ENCODE measurements at regions of chr5 and their contacts with region 1.

Region 1: GRCh38 chr5:80093796-80094195 is 58.6 kb downstream of the THBS4 start:
- DNase-seq: no peak
- H3K4me3 ChIP-seq: no peak overlapping the region
- H3K27ac ChIP-seq: no peak overlapping the region
- H3K4me1 ChIP-seq: no peaks in the 10 kb centered on the region
- H3K27me3 ChIP-seq: no peaks in the 10 kb centered on the region
- CTCF ChIP-seq: no peak

Region 2: GRCh38 chr5:79408028-79408427 is 685.8 kb before region 1 on chr5:
- CTCF ChIA-PET with region 1: interaction called, 13 read pairs
- POLR2A ChIA-PET with region 1: no interaction called
- intact Hi-C with region 1: no loop called
- DNase-seq: no peak
- H3K4me3 ChIP-seq: no peak overlapping the region
- H3K27ac ChIP-seq: no peak overlapping the region
- H3K4me1 ChIP-seq: no peaks in the 10 kb centered on the region
- H3K27me3 ChIP-seq: no peaks in the 10 kb centered on the region
- CTCF ChIP-seq: no peak

Region 3: GRCh38 chr5:79990598-79991507 is 102.9 kb before region 1 on chr5 and contains the start of gene MTX3:
- CTCF ChIA-PET with region 1: no interaction called
- POLR2A ChIA-PET with region 1: no interaction called
- intact Hi-C with region 1: no loop called
- DNase-seq: peak; percentile 75 to 77
- H3K4me3 ChIP-seq: peak within 1 kb of the TSS; percentile 72
- H3K27ac ChIP-seq: peak within 1 kb of the TSS; percentile 81
- H3K4me1 ChIP-seq: peaks cover 23% of the 10 kb centered on the region
- H3K27me3 ChIP-seq: no peaks in the 10 kb centered on the region
- CTCF ChIP-seq: no peak
- total RNA-seq, gene MTX3: 20.9 and 22.8 TPM in 2 replicates

Region 4: GRCh38 chr5:80255732-80256479 is 162.1 kb after region 1 on chr5 and contains the start of gene SERINC5:
- CTCF ChIA-PET with region 1: interaction called, 5 read pairs
- POLR2A ChIA-PET with region 1: no interaction called
- intact Hi-C with region 1: loop called (anchors 5 kb)
- DNase-seq: peak; percentile 53 to 79
- H3K4me3 ChIP-seq: peak within 1 kb of the TSS; percentile 76
- H3K27ac ChIP-seq: peak within 1 kb of the TSS; percentile 94
- H3K4me1 ChIP-seq: peaks cover 36% of the 10 kb centered on the region
- H3K27me3 ChIP-seq: no peaks in the 10 kb centered on the region
- CTCF ChIP-seq: no peak
- total RNA-seq, gene SERINC5: 68.8 and 77.7 TPM in 2 replicates

Region 5: GRCh38 chr5:80275347-80275746 is 181.6 kb after region 1 on chr5:
- CTCF ChIA-PET with region 1: interaction called, 15 read pairs
- POLR2A ChIA-PET with region 1: no interaction called
- intact Hi-C with region 1: loop called (anchors 1 kb)
- DNase-seq: no peak
- H3K4me3 ChIP-seq: no peak overlapping the region
- H3K27ac ChIP-seq: no peak overlapping the region
- H3K4me1 ChIP-seq: peaks cover 3% of the 10 kb centered on the region; the same call in 1 of the 2 replicates
- H3K27me3 ChIP-seq: no peaks in the 10 kb centered on the region
- CTCF ChIP-seq: peak; percentile 50; the same call in 1 of the 2 replicates

Region 6: GRCh38 chr5:80654391-80655230 is 560.8 kb after region 1 on chr5 and contains the starts of genes DHFR and MSH3:
- CTCF ChIA-PET with region 1: no interaction called
- POLR2A ChIA-PET with region 1: no interaction called
- intact Hi-C with region 1: no loop called
- DNase-seq: peak; percentile 78 to 80
- H3K4me3 ChIP-seq: peak within 1 kb of the TSS; percentile 94
- H3K27ac ChIP-seq: peak within 1 kb of the TSS; percentile 76
- H3K4me1 ChIP-seq: peaks cover 17% of the 10 kb centered on the region
- H3K27me3 ChIP-seq: no peaks in the 10 kb centered on the region
- CTCF ChIP-seq: no peak; the same call in 1 of the 2 replicates
- total RNA-seq, gene DHFR: 28.7 and 45.3 TPM in 2 replicates
- total RNA-seq, gene MSH3: 14.4 and 16.9 TPM in 2 replicates

Region 7: GRCh38 chr5:80672140-80672736 is 578.4 kb after region 1 on chr5:
- CTCF ChIA-PET with region 1: interaction called, 9 read pairs
- POLR2A ChIA-PET with region 1: no interaction called
- intact Hi-C with region 1: loop called (anchors 5 kb)
- DNase-seq: peak; percentile 57 to 58
- H3K4me3 ChIP-seq: no peak overlapping the region
- H3K27ac ChIP-seq: no peak overlapping the region
- H3K4me1 ChIP-seq: no peaks in the 10 kb centered on the region
- H3K27me3 ChIP-seq: no peaks in the 10 kb centered on the region
- CTCF ChIP-seq: peak; percentile 91

Region 8: DNA sequence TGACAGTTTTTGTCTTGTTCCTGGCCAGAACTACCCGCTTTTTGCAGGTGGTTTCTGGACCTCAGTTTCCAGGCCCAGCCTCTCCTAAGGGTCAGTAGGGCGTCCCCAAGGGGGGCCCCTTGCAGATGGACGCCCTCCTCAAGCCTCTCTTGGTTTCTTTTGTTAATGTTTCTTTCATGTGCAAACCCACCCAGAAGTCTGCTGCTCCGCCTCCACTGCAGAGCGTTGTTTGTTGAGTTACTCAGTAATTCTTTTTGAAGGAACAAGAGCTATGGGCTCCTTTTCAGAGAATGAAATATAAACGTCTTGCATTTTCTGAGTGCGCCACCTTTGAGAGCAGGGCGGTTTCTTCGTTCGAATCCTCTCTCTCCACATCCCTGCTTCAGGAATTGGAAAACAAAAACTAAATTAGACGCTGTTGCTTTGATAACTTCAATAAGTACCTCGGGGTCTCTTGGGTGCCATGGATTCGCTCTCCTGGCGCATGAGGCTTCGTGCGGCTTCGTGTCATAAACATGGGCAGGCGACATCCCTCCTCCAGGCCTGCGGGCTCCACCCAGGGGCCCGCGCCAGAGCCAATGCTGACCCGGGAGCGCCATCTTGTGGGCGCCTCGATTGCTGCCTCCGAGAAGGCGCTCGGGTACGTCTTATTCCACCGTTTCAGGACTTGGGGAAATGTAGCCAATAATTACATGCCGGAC is 1101.0 kb after region 1 on chr5:
- CTCF ChIA-PET with region 1: no interaction called
- POLR2A ChIA-PET with region 1: interaction called, 14 read pairs
- intact Hi-C with region 1: loop called (anchors 2 kb)
- DNase-seq: peak; percentile 62 to 81
- H3K4me3 ChIP-seq: no peak overlapping the region
- H3K27ac ChIP-seq: no peak overlapping the region
- H3K4me1 ChIP-seq: no peaks in the 10 kb centered on the region
- H3K27me3 ChIP-seq: no peaks in the 10 kb centered on the region
- CTCF ChIP-seq: peak; percentile 91

Measured in PC-9 (cell line).